ENCODE measurements at regions of chr15 and their contacts with region 1.

Region 1: DNA sequence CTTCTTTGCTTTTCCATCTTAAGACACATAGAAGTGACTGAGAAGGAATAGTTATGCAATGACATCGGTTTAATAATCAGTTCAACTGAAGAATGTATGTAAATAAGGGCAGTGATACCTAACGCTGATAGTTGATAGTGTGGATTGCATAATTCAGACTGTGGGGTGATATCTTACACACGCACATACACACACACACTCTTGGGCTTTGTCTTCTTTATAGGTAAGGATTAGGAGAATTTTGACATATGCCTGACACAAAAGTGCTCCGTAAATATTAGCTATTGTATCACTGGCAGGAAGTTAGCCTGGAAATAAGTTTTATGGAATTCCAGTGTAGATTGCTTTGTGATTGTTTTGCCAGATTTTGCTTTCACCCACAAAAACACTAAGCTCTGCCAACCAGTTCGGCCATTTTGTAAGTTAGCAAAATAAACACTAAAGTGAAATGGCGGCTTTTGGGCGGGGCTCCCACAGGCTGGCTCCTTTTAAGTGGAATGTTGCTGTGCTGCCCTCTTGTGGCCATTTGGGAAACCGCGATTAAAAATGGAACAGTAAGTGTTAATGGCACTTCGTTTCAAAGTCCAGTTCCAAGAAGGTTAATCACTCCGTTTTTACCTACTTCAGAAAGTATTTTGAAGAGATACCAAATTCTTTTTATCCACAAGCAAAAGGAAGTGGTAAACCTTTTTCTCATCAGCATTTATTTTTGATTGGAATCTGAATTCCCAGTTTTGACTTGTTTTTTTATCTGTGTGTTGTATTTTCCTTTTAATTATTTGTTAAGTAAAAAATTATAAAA is 17.7 kb downstream of the CHD2 start:
- DNase-seq: peak; percentile 86
- ATAC-seq: peak; percentile 28
- H3K4me3 Mint-ChIP-seq: peak overlapping the region; percentile 62
- H3K27ac Mint-ChIP-seq: peak overlapping the region; percentile 78
- H3K4me1 Mint-ChIP-seq: peaks cover 73% of the 10 kb centered on the region
- H3K27me3 Mint-ChIP-seq: no peaks in the 10 kb centered on the region

Region 2: DNA sequence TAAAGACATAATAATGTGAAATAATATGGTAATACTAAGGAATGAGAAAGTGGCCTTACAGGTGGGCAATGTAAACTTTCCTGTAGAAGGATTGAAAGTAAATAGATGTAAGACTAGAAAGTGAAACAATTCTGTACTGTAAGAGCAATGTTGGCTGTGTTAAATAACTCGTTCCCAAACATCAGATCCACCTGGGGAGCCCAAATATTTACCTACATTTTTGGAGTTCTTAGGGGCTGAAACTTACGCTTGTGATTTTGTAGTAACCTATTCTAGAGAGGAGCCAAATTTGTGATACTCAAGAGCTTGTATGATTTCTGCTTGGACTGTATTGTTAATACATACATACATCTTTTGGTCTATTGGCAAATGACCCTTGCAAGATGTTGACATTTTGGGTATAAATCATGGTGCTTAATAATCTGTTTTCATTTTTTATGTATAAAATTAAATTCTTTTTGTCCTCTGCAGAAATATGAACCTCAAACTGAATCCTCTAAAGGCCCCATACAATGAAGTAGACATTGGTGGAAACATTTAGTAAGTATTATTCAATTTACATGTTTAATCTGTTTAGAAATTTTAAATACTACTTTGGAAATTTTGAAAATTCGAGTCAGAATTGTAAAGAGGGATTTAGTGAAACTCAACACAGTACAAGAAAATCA is 26.1 kb before region 1 on chr15:
- POLR2A ChIA-PET with region 1: interaction called, 73 read pairs
- DNase-seq: no peak
- ATAC-seq: no peak
- H3K4me3 Mint-ChIP-seq: peak overlapping the region; percentile 73
- H3K27ac Mint-ChIP-seq: peak overlapping the region; percentile 14
- H3K4me1 Mint-ChIP-seq: peaks cover 65% of the 10 kb centered on the region
- H3K27me3 Mint-ChIP-seq: no peaks in the 10 kb centered on the region

Region 3: DNA sequence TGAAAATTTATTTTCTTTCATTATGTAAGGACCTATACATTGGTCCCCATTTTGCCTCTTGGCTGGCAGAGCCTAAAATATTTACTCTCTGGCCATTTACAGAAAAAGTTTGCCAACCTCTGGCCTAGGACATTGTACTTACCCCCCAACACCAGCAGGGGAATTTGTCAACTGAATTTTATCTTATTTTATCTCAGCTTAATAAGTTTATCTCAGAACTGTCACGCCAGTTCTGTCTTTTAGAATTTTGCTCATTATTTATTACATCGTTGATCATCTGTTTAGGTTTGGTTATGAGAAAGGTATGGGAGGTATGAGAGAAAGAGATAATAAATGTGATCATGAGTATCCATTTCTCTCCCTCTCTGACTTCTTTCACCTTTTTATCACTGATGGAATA is 20.6 kb after region 1 on chr15:
- POLR2A ChIA-PET with region 1: no interaction called
- DNase-seq: no peak
- ATAC-seq: no peak
- H3K4me3 Mint-ChIP-seq: no peak overlapping the region
- H3K27ac Mint-ChIP-seq: no peak overlapping the region
- H3K4me1 Mint-ChIP-seq: peaks cover 24% of the 10 kb centered on the region
- H3K27me3 Mint-ChIP-seq: no peaks in the 10 kb centered on the region

Region 4: GRCh38 chr15:93141371-93141794 is 223.6 kb after region 1 on chr15:
- POLR2A ChIA-PET with region 1: no interaction called
- DNase-seq: peak; percentile 38
- ATAC-seq: peak; percentile 79
- H3K4me3 Mint-ChIP-seq: peak overlapping the region; percentile 53
- H3K27ac Mint-ChIP-seq: no peak overlapping the region
- H3K4me1 Mint-ChIP-seq: peaks cover 9% of the 10 kb centered on the region
- H3K27me3 Mint-ChIP-seq: peaks cover 10% of the 10 kb centered on the region